Natural killer cell (primary cell): ENCODE measurements at regions of chr10 and their contacts with region 1.

Region 1: DNA sequence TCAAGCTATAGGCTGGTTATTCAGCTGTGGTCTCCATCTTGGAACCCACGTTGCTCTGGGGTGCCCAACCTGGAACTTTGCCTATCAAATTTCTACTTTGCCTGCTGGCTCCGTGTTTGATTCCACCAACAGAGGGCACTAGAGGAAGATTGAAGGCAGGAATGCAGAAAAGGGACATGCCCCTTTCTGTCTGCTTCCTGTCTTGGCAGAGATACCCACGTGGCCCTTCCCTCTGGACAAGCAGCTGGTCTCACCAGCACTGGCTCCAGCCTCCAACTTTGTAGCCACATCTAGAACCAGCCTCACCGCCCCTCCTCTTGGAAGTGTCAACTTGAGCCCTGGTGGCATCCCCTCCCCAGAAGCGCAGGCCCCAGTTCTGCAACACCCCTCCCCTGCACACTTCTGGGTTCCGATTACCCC is 52.1 kb upstream of the ZNF438 start:
- DNase-seq: peak in 1 of 2 donors; percentile 76
- ATAC-seq: peak; percentile 44 to 70 (median 44)
- H3K4me3 ChIP-seq: no peak overlapping the region
- H3K4me3 Mint-ChIP-seq: no peak overlapping the region
- H3K27ac ChIP-seq: no peak overlapping the region
- H3K27ac Mint-ChIP-seq: no peak overlapping the region
- H3K4me1 ChIP-seq: peaks cover 5% of the 10 kb centered on the region
- H3K4me1 Mint-ChIP-seq: no peaks in the 10 kb centered on the region
- H3K27me3 ChIP-seq: no peaks in the 10 kb centered on the region
- H3K27me3 Mint-ChIP-seq: peaks cover 8 to 13% of the 10 kb centered on the region in 2 donors
- CTCF ChIP-seq: peak; percentile 54

Region 2: GRCh38 chr10:31490858-31491504 is 407.2 kb after region 1 on chr10:
- intact Hi-C with region 1: loop called (anchors 10 kb)
- DNase-seq: peak in 1 of 2 donors; percentile 64
- ATAC-seq: peak in 2 of 3 donors; percentile 47 to 49
- H3K4me3 ChIP-seq: no peak overlapping the region
- H3K4me3 Mint-ChIP-seq: no peak overlapping the region
- H3K27ac ChIP-seq: no peak overlapping the region
- H3K27ac Mint-ChIP-seq: no peak overlapping the region
- H3K4me1 ChIP-seq: no peaks in the 10 kb centered on the region
- H3K4me1 Mint-ChIP-seq: no peaks in the 10 kb centered on the region
- H3K27me3 ChIP-seq: no peaks in the 10 kb centered on the region
- H3K27me3 Mint-ChIP-seq: no peaks in the 10 kb centered on the region
- CTCF ChIP-seq: peak; percentile 29

Region 3: GRCh38 chr10:31808258-31809218 is 724.8 kb after region 1 on chr10:
- intact Hi-C with region 1: loop called (anchors 5 kb)
- DNase-seq: peak in 1 of 2 donors; percentile 77
- ATAC-seq: peak; percentile 68 to 86 (median 70)
- H3K4me3 ChIP-seq: no peak overlapping the region
- H3K4me3 Mint-ChIP-seq: peak overlapping the region; percentile 62
- H3K27ac ChIP-seq: peak overlapping the region; percentile 12
- H3K27ac Mint-ChIP-seq: peak overlapping the region; percentile 72 to 86
- H3K4me1 ChIP-seq: peaks cover 4% of the 10 kb centered on the region
- H3K4me1 Mint-ChIP-seq: peaks cover 7 to 10% of the 10 kb centered on the region in 2 donors
- H3K27me3 ChIP-seq: no peaks in the 10 kb centered on the region
- H3K27me3 Mint-ChIP-seq: no peaks in the 10 kb centered on the region
- CTCF ChIP-seq: peak; percentile 73